ENCODE measurements at regions of chr10 and their contacts with region 1.

Region 1: DNA sequence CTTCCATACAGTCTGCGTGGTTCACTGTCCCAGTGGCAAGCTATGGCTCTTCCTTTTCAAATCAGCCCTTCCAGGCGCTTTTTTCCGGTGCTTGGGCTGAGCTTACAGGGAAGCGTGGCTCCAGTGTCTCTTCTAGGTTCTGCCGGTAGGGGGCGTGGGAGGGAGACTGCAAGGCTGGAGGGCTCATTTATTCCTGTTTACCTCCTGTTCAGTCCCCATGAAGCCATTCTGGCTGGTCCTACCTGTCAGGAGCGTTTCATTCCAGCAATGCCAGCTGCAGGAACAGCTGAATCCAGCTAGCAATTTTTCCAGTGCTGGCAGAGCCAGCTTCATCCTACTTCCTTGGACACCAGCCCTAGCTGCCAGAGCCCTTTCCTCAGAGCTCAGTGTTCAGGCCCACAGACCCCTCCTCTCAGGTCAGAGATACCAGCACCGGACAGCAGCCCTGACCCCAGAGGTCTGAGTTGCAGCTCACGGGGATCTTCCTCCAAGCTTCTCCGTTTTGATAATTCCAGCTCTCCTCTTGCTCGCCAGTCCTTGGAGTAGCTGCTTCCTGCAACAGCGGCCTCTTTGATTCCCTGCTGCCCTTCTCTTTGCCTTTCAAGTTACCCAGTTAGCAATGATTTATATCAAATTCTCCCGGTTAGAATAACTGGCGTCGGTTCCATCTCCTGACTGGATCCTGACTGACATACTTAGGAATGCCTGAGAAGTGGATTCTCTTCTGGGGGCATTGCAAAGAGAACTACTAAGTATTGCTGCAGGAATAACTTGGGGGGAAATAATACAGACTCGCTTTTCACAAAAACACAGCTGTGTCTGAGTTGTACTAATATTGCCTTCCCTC is 129.8 kb downstream of the FRMD4A start:
- DNase-seq: peak; percentile 26
- H3K4me3 ChIP-seq: no peak overlapping the region
- H3K27ac ChIP-seq: no peak overlapping the region
- H3K4me1 ChIP-seq: no peaks in the 10 kb centered on the region
- H3K27me3 ChIP-seq: no peaks in the 10 kb centered on the region
- CTCF ChIP-seq: peak; percentile 45
- EP300 ChIP-seq: no peak
- RAD21 ChIP-seq: no peak

Region 2: GRCh38 chr10:14478604-14479003 is 277.7 kb after region 1 on chr10:
- CTCF ChIA-PET with region 1: interaction called, 21 read pairs
- POLR2A ChIA-PET with region 1: no interaction called
- DNase-seq: peak; percentile 65
- H3K4me3 ChIP-seq: no peak overlapping the region
- H3K27ac ChIP-seq: no peak overlapping the region
- H3K4me1 ChIP-seq: no peaks in the 10 kb centered on the region
- H3K27me3 ChIP-seq: no peaks in the 10 kb centered on the region
- CTCF ChIP-seq: peak; percentile 74
- EP300 ChIP-seq: no peak
- RAD21 ChIP-seq: peak; percentile 92

Measured in SK-N-SH (cell line).